CD8-positive, alpha-beta T cell (primary cell): ENCODE measurements at regions of chr17 and their contacts with region 1.

Region 1: GRCh38 chr17:80101011-80101945 is at the start of gene GAA:
- DNase-seq: peak; percentile 77 to 95 (median 87)
- ATAC-seq: peak; percentile 90
- H3K4me3 ChIP-seq: peak within 1 kb of the TSS; percentile 91 to 92
- H3K4me3 Mint-ChIP-seq: peak within 1 kb of the TSS; percentile 88
- H3K27ac ChIP-seq: peak within 1 kb of the TSS; percentile 61 to 69
- H3K27ac Mint-ChIP-seq: peak within 1 kb of the TSS; percentile 74
- H3K4me1 ChIP-seq: peaks cover 23% of the 10 kb centered on the region
- H3K4me1 Mint-ChIP-seq: peaks cover 32% of the 10 kb centered on the region
- H3K27me3 ChIP-seq: no peaks in the 10 kb centered on the region
- H3K27me3 Mint-ChIP-seq: peaks cover 2% of the 10 kb centered on the region
- CTCF ChIP-seq: peak; percentile 69
- total RNA-seq, gene GAA: 21.3 to 22.6 TPM

Region 2: DNA sequence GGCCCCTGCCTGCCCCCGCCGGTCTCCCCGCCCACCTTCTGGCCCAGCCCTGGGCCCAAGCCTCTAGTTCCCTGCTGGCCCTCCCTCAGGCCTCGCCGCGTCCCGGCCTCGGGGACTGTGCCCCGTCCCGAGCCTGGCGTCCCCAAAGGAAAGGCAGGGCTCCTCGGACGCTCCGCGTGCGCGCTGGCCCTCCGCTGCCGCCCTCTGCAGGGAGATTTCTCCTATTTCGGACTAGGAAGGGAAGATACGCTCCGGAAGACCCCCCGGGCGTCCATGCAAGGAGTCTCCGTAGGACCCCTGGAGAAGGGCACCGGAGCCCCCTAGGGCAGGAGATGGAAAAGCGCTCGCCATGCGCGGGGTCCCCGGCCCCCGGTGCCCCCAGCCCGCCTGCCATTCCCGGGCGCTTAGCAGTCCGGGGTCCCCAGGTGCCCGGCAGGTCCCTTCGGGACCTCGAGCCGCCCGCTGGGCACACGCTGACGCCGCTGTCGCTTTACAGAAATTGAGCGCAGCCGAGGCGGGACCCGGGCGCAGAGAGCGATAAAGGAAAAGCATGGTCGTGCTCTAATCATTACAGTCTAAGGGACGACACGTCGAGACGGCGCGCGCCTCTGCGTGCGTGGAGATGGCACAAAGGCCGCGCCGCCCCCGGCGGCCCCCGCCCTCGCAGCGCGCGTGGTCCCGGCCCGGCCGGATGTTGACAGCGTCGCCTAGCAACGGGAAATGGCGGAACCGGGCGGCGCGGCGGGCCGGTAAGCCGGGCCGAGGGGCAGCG is 65.1 kb before region 1 on chr17 and contains the start of gene CCDC40:
- CTCF ChIA-PET with region 1: interaction called, 3 read pairs
- POLR2A ChIA-PET with region 1: interaction called, 3 read pairs
- intact Hi-C with region 1: loop called in 1 of 2 experiments (anchors 1 kb)
- DNase-seq: peak; percentile 66 to 93 (median 79)
- ATAC-seq: peak; percentile 79
- H3K4me3 ChIP-seq: peak within 1 kb of the TSS; percentile 64 to 86
- H3K4me3 Mint-ChIP-seq: peak within 1 kb of the TSS; percentile 89
- H3K27ac ChIP-seq: peak within 1 kb of the TSS; percentile 75 to 80
- H3K27ac Mint-ChIP-seq: peak within 1 kb of the TSS; percentile 49
- H3K4me1 ChIP-seq: peaks cover 12% of the 10 kb centered on the region
- H3K4me1 Mint-ChIP-seq: peaks cover 13% of the 10 kb centered on the region
- H3K27me3 ChIP-seq: peaks cover 0 to 6% of the 10 kb centered on the region in 2 experiments
- H3K27me3 Mint-ChIP-seq: peaks cover 10% of the 10 kb centered on the region
- CTCF ChIP-seq: peak; percentile 25
- total RNA-seq, gene CCDC40: 1.0 to 1.2 TPM

Region 3: DNA sequence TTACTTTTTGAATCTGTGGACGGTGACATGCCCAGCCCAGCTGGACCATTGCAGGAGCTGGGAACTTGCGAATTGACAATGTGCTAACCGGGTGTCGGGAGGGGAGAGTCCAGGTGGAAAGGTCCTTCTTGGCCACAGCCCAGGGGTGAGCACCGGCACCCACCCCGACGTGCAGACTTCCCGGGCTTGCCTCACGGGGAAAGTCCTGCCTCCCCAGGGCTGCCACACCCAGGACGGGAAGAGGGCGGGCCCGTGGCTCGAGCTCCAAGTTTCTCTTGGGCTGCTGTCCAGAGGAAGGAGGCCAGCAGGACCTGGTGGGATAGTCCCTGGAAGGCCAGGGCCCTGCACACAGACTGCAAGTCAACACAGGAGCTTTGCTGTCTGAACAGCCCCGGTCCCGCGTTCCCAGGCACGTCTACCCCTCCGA is 86.2 kb after region 1 on chr17:
- CTCF ChIA-PET with region 1: no interaction called
- POLR2A ChIA-PET with region 1: no interaction called
- intact Hi-C with region 1: no loop called
- DNase-seq: no peak
- ATAC-seq: no peak
- H3K4me3 ChIP-seq: no peak overlapping the region
- H3K4me3 Mint-ChIP-seq: no peak overlapping the region
- H3K27ac ChIP-seq: no peak overlapping the region
- H3K27ac Mint-ChIP-seq: no peak overlapping the region
- H3K4me1 ChIP-seq: no peaks in the 10 kb centered on the region
- H3K4me1 Mint-ChIP-seq: no peaks in the 10 kb centered on the region
- H3K27me3 ChIP-seq: no peaks in the 10 kb centered on the region
- H3K27me3 Mint-ChIP-seq: peaks cover 12% of the 10 kb centered on the region
- CTCF ChIP-seq: no peak

Region 4: DNA sequence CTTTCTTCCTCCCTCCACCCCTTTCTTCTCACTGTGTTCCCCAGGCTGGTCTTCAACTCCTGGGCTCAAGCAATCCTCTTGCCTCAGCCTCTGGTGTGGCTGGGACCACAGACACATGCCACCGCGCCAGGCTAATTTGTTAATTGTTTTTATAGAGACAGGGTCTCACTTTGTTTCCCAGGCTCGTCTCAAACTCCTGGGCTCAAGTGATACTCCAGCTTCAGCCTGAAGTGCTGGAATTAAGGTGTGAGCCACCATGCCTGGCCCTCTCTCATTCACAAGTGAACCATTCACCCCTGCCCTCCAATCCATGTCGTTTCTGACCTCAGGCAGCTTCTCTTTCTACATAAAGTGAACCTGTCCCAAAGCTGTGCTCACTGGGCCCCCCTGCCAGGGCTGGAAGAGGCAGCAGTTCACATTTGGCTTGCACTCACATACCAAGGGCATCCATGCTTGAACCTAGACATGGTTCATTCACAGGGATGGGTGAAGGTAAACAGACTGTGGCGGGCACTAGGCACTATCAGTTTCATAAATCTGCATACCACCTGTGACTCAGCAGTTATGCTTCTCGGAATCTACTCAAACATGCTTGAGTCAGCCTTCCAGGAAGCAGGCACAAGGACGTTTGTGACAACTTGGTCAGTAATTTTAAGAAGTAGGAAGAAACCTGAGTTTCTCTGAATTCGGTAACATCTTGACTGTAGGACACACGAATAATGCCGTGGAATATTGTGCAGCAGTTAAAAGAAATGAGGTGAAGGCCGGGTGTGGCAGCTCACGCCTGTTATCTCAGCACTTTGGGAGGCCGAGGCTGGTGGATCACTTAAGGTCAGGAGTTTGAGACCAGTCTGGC is 153.3 kb after region 1 on chr17:
- CTCF ChIA-PET with region 1: interaction called, 3 read pairs
- POLR2A ChIA-PET with region 1: no interaction called
- intact Hi-C with region 1: loop called in 1 of 2 experiments (anchors 1 kb)
- DNase-seq: peak in 5 of 9 experiments; percentile 33 to 75 (median 54)
- ATAC-seq: peak; percentile 34
- H3K4me3 ChIP-seq: no peak overlapping the region
- H3K4me3 Mint-ChIP-seq: no peak overlapping the region
- H3K27ac ChIP-seq: peak overlapping the region in 1 of 2 experiments; percentile 51
- H3K27ac Mint-ChIP-seq: peak overlapping the region; percentile 85
- H3K4me1 ChIP-seq: peaks cover 7% of the 10 kb centered on the region
- H3K4me1 Mint-ChIP-seq: peaks cover 28% of the 10 kb centered on the region
- H3K27me3 ChIP-seq: no peaks in the 10 kb centered on the region
- H3K27me3 Mint-ChIP-seq: no peaks in the 10 kb centered on the region
- CTCF ChIP-seq: no peak

Region 5: GRCh38 chr17:80544655-80545498 is 443.6 kb after region 1 on chr17 and contains the start of gene RPTOR:
- CTCF ChIA-PET with region 1: no interaction called
- POLR2A ChIA-PET with region 1: no interaction called
- intact Hi-C with region 1: loop called in 1 of 2 experiments (anchors 10 kb)
- DNase-seq: peak; percentile 77 to 92 (median 87)
- ATAC-seq: peak; percentile 99
- H3K4me3 ChIP-seq: peak within 1 kb of the TSS; percentile 95
- H3K4me3 Mint-ChIP-seq: peak within 1 kb of the TSS; percentile 94
- H3K27ac ChIP-seq: peak within 1 kb of the TSS; percentile 61 to 71
- H3K27ac Mint-ChIP-seq: peak within 1 kb of the TSS; percentile 92
- H3K4me1 ChIP-seq: peaks cover 14% of the 10 kb centered on the region
- H3K4me1 Mint-ChIP-seq: peaks cover 32% of the 10 kb centered on the region
- H3K27me3 ChIP-seq: no peaks in the 10 kb centered on the region
- H3K27me3 Mint-ChIP-seq: peaks cover 12% of the 10 kb centered on the region
- CTCF ChIP-seq: no peak
- total RNA-seq, gene RPTOR: 44.5 to 48.3 TPM